ENCODE measurements at regions of chr16 and their contacts with region 1.

Region 1: GRCh38 chr16:17369421-17370222 is 101.1 kb downstream of the XYLT1 start:
- DNase-seq: peak; percentile 87
- H3K4me3 Mint-ChIP-seq: peak overlapping the region; percentile 85
- H3K27ac Mint-ChIP-seq: peak overlapping the region; percentile 100
- H3K4me1 Mint-ChIP-seq: peaks cover 97% of the 10 kb centered on the region
- H3K27me3 Mint-ChIP-seq: no peaks in the 10 kb centered on the region

Region 2: DNA sequence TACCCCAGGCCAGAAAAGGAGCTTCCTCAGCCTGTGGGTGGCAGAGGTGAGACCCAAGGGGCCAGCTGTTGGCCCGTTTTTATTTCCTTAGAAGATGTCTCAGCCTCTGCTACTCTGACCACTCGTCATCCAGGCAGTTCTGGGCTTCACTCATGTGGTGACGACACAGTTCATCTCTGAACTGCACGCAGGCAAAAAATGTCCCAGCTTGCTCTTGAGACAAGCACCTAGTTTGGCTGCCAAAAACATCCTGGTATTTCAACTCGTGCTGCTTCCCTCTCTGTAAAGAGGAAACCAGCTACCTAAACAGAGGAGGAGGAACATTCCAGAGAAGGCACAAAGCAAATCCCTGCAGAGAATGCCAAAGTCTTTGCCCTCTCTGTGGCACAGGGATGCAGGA is 24.6 kb before region 1 on chr16:
- CTCF ChIA-PET with region 1: interaction called, 11 read pairs
- DNase-seq: no peak
- H3K4me3 Mint-ChIP-seq: no peak overlapping the region
- H3K27ac Mint-ChIP-seq: peak overlapping the region; percentile 89
- H3K4me1 Mint-ChIP-seq: peaks cover 90% of the 10 kb centered on the region
- H3K27me3 Mint-ChIP-seq: no peaks in the 10 kb centered on the region

Region 3: DNA sequence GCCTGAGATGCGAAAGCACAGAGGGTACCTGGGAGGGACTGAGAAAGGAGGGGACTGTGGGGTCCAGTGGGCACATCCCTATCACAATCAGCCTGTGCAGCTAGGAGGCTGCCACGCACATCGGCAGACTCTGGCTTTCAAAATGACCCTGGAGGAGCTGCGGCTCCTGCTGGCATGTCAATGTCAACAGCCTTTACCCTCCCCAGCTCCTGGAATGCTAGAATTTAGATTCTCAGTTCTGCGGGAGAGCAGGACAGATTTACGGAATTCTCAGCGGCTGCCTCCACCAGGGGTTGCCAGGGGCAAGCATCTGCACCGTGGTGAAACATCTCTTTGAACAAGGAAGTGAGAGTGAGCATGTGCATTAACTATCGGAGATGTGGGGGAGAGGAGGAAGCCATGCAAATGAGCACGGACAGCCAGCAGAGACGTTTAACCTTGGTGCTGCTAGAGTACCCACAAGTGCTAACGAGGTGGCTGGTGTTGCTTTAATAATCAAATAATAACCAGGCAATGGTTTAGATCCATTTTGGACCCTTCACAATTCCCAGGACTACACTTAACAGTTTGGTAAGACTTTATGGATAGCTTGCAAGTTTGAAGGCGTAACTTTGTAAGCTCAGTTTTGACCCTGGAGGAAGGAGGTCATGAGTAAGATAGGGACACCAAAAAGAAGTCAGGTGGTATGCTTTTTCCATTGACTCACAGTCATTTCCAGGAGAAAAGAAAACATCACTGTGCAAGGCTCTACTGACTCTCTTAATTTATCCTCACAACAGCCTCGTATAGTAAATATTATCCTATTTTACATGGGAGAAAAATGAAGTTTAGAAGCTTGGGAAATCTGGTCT is 47.1 kb after region 1 on chr16:
- CTCF ChIA-PET with region 1: interaction called, 22 read pairs
- DNase-seq: peak; percentile 60
- H3K4me3 Mint-ChIP-seq: peak overlapping the region; percentile 51
- H3K27ac Mint-ChIP-seq: peak overlapping the region; percentile 88
- H3K4me1 Mint-ChIP-seq: peaks cover 47% of the 10 kb centered on the region
- H3K27me3 Mint-ChIP-seq: no peaks in the 10 kb centered on the region

Measured in activated naive CD4-positive, alpha-beta T cell treated with anti-CD3 and anti-CD28 coated beads, Interleukin-2, amount 10 ng/mL, durations not matched to agents 7 days and 5 days (primary cell).